ENCODE measurements at regions of chr1 and their contacts with region 1.

Region 1: DNA sequence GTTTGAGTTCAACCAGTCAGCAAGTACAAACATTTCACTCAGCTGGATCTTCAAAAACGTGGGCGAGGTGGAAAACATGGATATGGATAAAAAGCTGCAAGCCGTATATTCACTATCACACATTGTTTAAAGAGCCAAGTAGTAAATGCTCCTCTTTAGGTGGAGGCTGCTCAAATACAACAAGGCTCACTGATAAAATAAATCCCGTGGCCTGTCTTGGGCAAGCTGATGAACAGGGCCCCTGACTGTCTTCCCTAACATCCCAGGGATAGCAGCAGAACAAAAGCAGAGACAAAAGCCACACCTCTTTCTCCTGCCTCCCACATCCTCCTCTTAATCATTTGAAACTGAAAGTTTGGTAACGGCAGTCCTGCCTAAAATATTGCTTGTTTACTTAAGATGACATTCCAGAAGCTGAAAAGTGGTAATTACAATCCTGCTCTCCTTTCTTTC is 357.7 kb downstream of the TTLL7 start:
- DNase-seq: no peak
- ATAC-seq: peak; percentile 39 to 70
- H3K4me3 ChIP-seq: no peak overlapping the region
- H3K27ac ChIP-seq: no peak overlapping the region
- H3K4me1 ChIP-seq: peaks cover 2% of the 10 kb centered on the region
- H3K27me3 ChIP-seq: no peaks in the 10 kb centered on the region

Region 2: DNA sequence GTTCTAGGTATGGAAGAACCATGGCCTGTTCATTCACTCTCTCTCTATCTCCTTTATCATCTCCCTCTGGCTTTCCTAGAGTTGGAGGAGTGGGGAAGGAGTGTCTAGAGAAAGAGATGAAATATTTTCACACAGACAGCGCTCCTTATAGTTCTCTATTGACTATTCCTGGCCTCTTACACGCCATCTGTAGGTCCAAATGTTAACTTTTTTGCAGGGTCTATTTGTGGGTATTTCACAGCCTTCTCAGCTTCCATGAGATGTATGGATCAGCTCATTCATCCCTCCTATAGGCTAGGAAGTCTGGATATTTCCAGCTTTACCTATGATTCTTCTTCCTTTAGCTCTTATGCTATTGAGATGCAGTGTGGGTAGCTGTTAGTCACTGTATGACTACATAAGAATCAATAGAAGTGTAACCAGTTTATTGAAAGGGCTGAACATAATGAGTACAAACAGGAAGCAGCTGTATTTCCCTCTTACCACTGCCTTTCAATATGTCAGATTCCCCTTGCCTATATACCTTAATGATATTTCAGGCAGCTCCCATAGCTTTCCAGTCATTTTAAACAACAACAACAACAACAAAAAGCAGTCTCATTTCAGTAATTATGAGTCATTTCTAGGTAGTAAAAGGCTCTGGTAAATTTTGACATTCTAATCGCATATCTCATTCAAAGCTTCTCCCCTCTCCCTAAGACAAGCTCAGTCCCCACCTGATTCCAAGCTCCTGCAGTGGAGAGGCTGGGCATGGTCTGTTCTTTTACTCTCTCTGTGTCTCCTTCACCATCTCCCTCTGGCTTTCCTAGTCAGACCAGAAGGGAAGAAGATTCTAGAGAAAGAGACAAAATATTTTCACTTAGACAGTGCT is 208.2 kb after region 1 on chr1:
- intact Hi-C with region 1: loop called in 1 of 4 experiments (anchors 10 kb)
- DNase-seq: no peak
- ATAC-seq: no peak
- H3K4me3 ChIP-seq: no peak overlapping the region
- H3K27ac ChIP-seq: no peak overlapping the region
- H3K4me1 ChIP-seq: no peaks in the 10 kb centered on the region
- H3K27me3 ChIP-seq: no peaks in the 10 kb centered on the region

Measured in right cardiac atrium (tissue), 5 donors.